KBM-7 (cell line): ENCODE measurements at regions of chr16 and their contacts with region 1.

Region 1: GRCh38 chr16:77171745-77172635 is 19.0 kb upstream of the MON1B start:
- DNase-seq: peak; percentile 55

Region 2: GRCh38 chr16:75789237-75789636 is 1382.8 kb before region 1 on chr16:
- in situ Hi-C with region 1: loop called (anchors 25 kb)
- DNase-seq: peak; percentile 68

Region 3: DNA sequence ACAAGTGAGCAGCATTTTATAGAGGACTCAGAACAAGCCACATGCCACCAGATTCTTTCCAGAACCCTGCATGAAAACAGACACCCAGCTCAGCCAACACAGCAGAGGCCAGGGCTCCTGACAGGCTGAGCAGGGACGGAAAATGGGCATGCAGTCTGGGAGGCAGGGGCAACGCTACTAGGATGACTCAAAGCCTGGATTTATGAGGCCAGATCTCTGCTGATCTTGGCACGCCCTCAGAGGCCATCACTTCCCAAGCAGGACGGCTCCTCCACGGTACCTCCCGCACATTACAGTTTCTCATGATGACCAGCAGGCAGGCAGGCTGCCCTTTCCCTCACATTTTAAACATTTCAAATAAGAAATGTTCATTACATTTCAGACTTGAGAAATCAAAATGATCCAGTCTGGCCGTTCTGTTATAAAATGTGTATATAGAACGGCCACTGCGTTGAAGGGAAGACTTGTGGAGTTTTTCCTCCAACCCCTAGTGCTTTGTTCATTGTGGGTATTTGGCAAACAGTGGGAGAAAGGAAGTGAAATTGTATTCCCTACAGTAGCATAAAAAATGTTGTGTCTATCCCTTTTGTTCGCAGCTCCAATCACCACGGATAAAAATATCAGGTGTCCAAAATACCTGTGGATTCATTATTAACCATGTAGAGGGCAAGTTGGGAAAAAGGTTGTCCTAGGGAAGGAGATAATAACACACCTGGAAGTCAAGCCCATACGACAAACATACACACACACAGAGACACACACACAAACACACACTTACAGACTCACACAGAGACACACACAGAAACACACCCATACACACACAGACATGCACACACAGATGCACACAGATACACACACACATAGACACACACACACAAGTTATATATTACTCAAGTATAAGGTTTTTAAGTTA is 327.6 kb after region 1 on chr16:
- in situ Hi-C with region 1: no loop called
- DNase-seq: no peak